Activated CD4-positive, alpha-beta T cell treated with anti-CD3 and anti-CD28 coated beads, Interleukin-2, amount 10 ng/mL, durations not matched to agents 24 days and 14 days (primary cell): ENCODE measurements at regions of chr1 and their contacts with region 1.

Region 1: GRCh38 chr1:172671591-172671990 is 12.7 kb downstream of the FASLG start:
- DNase-seq: no peak
- H3K4me3 Mint-ChIP-seq: peak overlapping the region; percentile 24
- H3K27ac Mint-ChIP-seq: no peak overlapping the region
- H3K4me1 Mint-ChIP-seq: peaks cover 79% of the 10 kb centered on the region
- H3K27me3 Mint-ChIP-seq: no peaks in the 10 kb centered on the region

Region 2: GRCh38 chr1:172699111-172699510 is 27.5 kb after region 1 on chr1:
- intact Hi-C with region 1: loop called (anchors 1 kb)
- DNase-seq: peak; percentile 92
- H3K4me3 Mint-ChIP-seq: peak overlapping the region; percentile 82
- H3K27ac Mint-ChIP-seq: peak overlapping the region; percentile 90
- H3K4me1 Mint-ChIP-seq: peaks cover 49% of the 10 kb centered on the region
- H3K27me3 Mint-ChIP-seq: no peaks in the 10 kb centered on the region